ENCODE measurements at regions of chr5 and their contacts with region 1.

Region 1: DNA sequence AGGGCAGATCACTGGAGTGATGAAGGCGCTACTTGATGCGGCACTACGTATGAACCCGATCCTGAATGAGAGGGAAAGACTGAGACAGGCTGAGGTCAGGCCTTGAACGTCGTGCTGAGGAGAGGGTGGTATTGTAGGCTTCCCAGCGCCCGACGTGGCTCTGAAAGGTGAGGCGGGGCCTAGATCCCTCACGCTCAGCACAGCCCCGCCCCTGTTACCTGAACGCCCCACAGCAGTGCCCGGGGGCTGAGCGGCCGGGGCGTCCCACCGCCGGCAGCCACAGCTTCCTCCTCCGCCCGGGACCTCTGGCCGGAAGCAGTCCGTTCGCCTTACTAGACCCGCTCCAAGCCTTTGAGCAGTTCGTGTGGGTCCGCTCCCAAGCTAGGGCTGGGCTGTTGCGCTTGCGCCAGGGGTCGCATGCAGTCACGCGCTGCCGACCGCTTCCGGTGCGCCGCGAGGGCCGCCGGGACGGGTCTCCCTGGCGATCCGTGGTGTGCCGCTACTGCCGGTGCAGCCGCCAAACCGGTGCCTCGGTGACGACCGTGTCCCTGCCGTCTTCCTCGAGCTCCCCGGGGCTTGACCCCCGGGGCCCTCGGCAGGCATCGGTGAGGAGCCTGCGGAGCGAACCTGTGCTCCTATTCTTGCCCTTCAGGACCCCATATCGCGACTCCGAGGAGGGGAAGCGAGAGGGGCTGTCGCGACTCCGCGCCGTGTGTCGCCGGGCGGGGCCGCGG is at the starts of genes HMGXB3 and TIGD6:
- DNase-seq: peak; percentile 93
- H3K4me3 Mint-ChIP-seq: peak within 1 kb of the TSS; percentile 86
- H3K27ac Mint-ChIP-seq: peak within 1 kb of the TSS; percentile 93
- H3K4me1 Mint-ChIP-seq: peaks cover 39% of the 10 kb centered on the region
- H3K27me3 Mint-ChIP-seq: no peaks in the 10 kb centered on the region
- total RNA-seq, gene HMGXB3: 29.4 to 31.3 TPM
- total RNA-seq, gene TIGD6: 2.5 to 2.6 TPM

Region 2: DNA sequence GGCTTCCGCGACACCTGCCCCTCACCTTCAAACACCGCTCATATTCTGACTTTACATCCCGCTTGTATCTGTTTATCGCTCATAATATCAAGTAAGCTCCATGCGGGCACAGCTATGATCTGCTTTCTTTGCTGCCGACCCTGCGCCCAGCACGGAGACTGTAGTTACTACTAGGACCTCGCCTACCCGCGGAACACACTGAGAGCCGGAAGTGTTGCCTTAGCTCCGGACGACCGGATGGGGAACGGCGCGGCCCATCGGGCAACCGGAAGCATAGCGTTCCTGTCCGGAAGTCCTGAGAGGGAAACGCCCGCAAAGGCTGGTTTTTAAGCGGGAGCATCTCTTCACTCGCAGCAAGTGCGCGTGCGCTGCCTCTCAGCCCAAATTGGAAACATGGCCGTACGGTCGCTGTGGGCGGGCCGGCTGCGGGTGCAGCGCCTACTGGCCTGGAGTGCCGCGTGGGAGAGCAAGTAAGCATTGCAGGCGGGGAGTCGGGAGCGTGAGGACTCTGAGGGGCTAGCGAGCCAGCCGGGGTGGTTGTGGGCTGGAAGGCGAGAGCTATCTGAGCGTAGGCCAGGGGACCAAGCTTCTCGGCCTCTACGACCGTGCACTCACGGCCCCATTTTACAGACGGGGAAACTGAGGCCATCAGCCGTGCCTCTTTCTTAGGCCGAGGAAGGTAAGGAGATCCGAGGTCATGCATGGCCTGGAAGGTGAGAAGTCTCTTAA is 655.1 kb before region 1 on chr5 and contains the start of gene GRPEL2:
- CTCF ChIA-PET with region 1: no interaction called
- POLR2A ChIA-PET with region 1: no interaction called
- intact Hi-C with region 1: loop called (anchors 2 kb)
- DNase-seq: peak; percentile 97
- H3K4me3 Mint-ChIP-seq: peak within 1 kb of the TSS; percentile 97
- H3K27ac Mint-ChIP-seq: peak within 1 kb of the TSS; percentile 93
- H3K4me1 Mint-ChIP-seq: peaks cover 46% of the 10 kb centered on the region
- H3K27me3 Mint-ChIP-seq: no peaks in the 10 kb centered on the region
- total RNA-seq, gene GRPEL2: 32.9 to 37.2 TPM

Region 3: DNA sequence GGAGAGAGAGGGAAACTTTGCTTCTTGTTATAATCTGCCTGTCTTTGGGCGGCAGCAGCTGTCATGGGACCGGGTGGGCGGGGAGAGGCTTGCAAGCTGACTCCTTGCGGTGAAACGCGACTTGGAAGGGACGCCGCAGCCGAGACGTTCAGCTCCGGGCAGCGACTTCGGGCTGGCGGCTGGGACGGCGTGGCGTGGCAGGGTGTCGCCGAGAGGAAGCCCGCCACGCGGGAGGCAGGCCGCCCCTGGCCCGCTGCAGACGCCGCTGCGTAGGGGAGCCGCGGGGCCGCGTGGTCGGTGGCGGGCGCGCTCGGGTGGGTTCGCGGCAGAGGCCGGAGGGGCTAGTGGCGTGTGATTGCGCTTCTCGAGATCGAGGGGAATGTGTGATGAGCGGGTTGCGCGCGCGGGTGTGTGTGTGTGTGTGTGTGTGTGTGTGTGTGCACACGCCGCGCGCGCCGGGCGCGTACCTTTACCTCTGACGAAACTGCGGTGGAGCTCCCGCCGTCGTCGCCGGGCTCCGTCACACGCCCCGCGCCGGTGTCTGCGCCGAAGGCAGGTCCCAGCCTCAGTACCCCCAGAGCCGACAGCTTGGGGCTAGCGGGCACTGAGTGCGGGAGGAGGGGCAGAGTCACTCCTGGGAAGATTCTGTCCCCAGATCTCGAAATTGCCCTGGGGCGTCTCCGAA is 268.6 kb before region 1 on chr5:
- CTCF ChIA-PET with region 1: interaction called, 4 read pairs
- POLR2A ChIA-PET with region 1: interaction called, 4 read pairs
- intact Hi-C with region 1: loop called (anchors 2 kb)
- DNase-seq: peak; percentile 89
- H3K4me3 Mint-ChIP-seq: peak overlapping the region; percentile 77
- H3K27ac Mint-ChIP-seq: no peak overlapping the region
- H3K4me1 Mint-ChIP-seq: peaks cover 3% of the 10 kb centered on the region
- H3K27me3 Mint-ChIP-seq: no peaks in the 10 kb centered on the region

Region 4: DNA sequence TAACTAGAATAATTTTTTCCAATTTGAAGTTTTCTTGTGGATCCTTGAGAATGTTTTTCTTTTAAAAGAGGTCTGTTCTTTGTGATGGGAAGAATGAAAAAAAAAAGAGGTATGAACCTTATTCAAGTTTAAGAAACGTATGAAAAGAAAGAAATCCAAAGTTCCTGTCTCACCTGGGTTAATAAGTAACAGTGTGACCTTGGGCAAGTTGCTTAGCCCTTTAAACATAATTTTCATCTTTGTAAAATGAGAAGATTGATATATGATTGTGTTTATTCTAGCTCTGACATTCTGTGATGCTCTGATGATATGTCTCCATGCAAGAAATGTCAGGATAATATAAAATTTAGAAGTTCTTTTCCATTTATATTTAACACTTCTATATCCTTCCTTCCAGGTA is 20.5 kb before region 1 on chr5:
- CTCF ChIA-PET with region 1: no interaction called
- POLR2A ChIA-PET with region 1: no interaction called
- intact Hi-C with region 1: no loop called
- DNase-seq: no peak
- H3K4me3 Mint-ChIP-seq: no peak overlapping the region
- H3K27ac Mint-ChIP-seq: no peak overlapping the region
- H3K4me1 Mint-ChIP-seq: peaks cover 4% of the 10 kb centered on the region
- H3K27me3 Mint-ChIP-seq: no peaks in the 10 kb centered on the region

Region 5: GRCh38 chr5:150066901-150067396 is 66.5 kb after region 1 on chr5:
- CTCF ChIA-PET with region 1: no interaction called
- POLR2A ChIA-PET with region 1: no interaction called
- intact Hi-C with region 1: loop called (anchors 5 kb)
- DNase-seq: peak; percentile 26
- H3K4me3 Mint-ChIP-seq: no peak overlapping the region
- H3K27ac Mint-ChIP-seq: peak overlapping the region; percentile 38
- H3K4me1 Mint-ChIP-seq: peaks cover 12% of the 10 kb centered on the region
- H3K27me3 Mint-ChIP-seq: peaks cover 2% of the 10 kb centered on the region

Region 6: GRCh38 chr5:150409638-150410523 is 409.5 kb after region 1 on chr5:
- CTCF ChIA-PET with region 1: no interaction called
- POLR2A ChIA-PET with region 1: no interaction called
- intact Hi-C with region 1: loop called (anchors 5 kb)
- DNase-seq: peak; percentile 70
- H3K4me3 Mint-ChIP-seq: peak overlapping the region; percentile 97
- H3K27ac Mint-ChIP-seq: peak overlapping the region; percentile 99
- H3K4me1 Mint-ChIP-seq: peaks cover 39% of the 10 kb centered on the region
- H3K27me3 Mint-ChIP-seq: no peaks in the 10 kb centered on the region

Measured in activated CD4-positive, alpha-beta memory T cell treated with anti-CD3 and anti-CD28 coated beads for 36 hours (primary cell).